Heart right ventricle (tissue), 16 donors: ENCODE measurements at regions of chr6 and their contacts with region 1.

Region 1: DNA sequence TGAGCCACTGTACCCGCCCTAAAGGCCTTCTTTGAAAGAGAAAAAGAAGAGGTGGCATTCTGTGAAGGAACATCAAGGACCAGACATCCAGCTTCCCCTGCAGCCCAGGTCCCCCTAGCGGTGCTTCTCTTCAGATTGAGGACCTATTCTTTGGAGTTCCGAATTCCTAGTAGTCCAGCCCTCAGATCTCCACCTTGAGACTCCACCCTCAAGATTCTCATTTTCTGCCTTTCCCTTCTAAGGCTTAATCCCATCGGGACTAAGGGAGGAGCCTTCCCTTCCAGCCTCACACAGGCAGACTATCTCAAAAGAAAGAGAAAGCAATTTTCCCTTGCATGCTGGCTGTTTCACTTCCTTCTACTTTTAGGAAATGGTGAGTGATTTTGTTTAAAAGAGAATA is 32.5 kb downstream of the MUC22 start:
- DNase-seq: peak; percentile 23 to 45
- ATAC-seq: peak in 7 of 8 donors; percentile 42 to 71 (median 61)
- H3K4me3 ChIP-seq: peak overlapping the region in 1 of 10 donors; percentile 5
- H3K27ac ChIP-seq: peak overlapping the region in 2 of 10 donors; percentile 10 to 21
- H3K4me1 ChIP-seq: peaks cover 0 to 9% (median 0%) of the 10 kb centered on the region in 9 donors
- H3K27me3 ChIP-seq: peaks cover 0 to 21% (median 9%) of the 10 kb centered on the region in 7 donors
- CTCF ChIP-seq: peak; percentile 31 to 63 (median 50)

Region 2: DNA sequence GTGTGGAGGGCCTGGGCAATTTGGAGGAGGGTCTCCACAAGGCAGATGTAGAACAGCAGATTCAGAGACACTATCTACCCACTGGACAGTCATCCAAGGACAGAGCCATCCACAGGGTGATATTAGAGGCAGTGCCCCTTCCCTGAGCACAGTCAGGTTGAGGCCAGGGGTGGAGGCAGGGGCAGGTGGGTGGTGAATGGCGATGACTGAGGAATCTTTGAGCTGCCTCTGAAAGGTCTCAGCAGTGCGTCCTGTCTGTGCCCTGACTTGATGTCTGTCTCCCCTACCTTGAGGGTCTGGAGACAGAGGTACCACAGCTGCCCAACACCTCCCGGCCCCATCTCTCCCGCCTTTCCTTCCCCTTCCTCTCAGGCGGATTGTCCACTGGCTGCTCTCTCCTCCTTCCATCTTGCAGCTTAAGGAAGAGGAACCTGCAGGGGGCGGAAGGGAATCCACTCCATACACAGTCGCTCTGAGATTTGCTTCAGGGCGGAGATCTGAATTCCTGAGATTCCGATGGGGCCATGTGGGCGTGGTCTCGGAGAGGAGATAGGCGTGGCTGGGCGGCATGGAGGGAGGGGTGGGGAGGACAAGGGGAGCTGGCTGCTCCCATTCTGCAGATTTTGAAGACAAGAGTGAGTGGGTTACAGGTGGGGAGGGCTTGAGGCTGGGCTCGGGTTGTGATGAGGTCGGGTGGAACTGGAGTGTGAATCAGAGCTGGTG is 100.3 kb before region 1 on chr6:
- intact Hi-C with region 1: loop called in 4 of 10 experiments (anchors 5 to 10 kb)
- DNase-seq: peak; percentile 64 to 71
- ATAC-seq: peak; percentile 65 to 93 (median 86)
- H3K4me3 ChIP-seq: no peak overlapping the region
- H3K27ac ChIP-seq: no peak overlapping the region
- H3K4me1 ChIP-seq: peaks cover 0 to 13% (median 7%) of the 10 kb centered on the region in 9 donors
- H3K27me3 ChIP-seq: peaks cover 0 to 36% (median 9%) of the 10 kb centered on the region in 7 donors
- CTCF ChIP-seq: peak in 7 of 9 donors; percentile 12 to 53 (median 42)